ENCODE measurements at regions of chr1 and their contacts with region 1.

Region 1: DNA sequence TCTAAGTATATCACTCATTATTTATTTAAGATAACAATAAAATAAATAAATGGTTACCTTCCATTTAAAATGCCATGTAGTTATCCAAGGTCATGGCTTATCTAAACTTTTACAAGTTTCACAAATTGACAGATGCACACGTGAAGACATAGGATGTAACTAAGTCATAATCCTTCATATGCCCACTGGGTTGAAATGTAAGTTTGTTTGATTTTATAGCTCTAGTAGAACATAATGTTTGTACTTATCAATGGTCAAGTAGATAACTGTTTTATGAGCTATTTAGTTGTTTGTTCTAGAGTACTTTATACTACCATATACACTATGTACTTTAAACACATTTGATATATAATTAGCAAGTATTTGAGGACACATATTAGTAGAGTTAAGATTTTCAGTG is 43.0 kb downstream of the ITGB3BP start:
- DNase-seq: no peak
- H3K4me3 Mint-ChIP-seq: no peak overlapping the region
- H3K27ac Mint-ChIP-seq: no peak overlapping the region
- H3K4me1 Mint-ChIP-seq: no peaks in the 10 kb centered on the region
- H3K27me3 Mint-ChIP-seq: no peaks in the 10 kb centered on the region

Region 2: DNA sequence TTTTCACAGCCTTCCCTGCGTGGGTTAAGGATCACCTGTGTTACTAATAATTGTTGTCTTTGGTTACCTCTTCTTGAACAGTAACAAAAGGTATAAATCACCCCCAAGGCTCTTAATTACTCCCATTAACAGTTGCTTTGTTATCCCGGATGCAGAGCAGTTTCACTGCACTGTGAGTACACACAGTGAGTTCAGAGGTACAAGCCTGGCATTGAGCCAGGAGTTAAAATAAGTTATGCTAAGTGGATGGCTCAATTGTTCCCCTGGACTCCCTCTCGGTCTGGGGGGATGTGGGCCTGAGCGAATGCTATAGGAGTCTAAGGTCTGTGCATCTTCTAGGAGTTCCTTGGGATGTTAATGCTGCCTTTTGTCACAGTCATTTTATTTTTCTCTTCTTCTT is 437.8 kb before region 1 on chr1:
- intact Hi-C with region 1: no loop called
- DNase-seq: no peak
- H3K4me3 Mint-ChIP-seq: no peak overlapping the region
- H3K27ac Mint-ChIP-seq: no peak overlapping the region
- H3K4me1 Mint-ChIP-seq: no peaks in the 10 kb centered on the region
- H3K27me3 Mint-ChIP-seq: no peaks in the 10 kb centered on the region

Region 3: DNA sequence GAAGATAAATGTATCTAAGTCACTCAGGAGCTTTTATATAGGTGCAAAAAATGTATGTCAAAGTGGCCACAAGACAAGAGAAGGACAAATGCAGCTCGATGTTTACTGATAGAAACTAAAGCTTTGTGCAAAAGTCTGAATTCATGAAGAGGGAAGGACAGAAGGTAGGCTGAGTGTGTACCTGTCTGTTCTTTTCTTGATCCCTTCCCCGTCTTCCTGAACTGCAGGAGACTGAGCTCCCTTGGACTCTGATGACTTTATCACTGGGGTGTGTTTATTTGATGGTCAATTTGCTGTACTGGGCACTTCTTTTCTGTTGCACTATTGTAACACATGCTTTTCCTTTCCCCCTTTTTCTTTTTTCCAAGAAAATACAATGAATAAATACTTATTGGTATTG is 17.5 kb after region 1 on chr1:
- intact Hi-C with region 1: loop called (anchors 1 kb)
- DNase-seq: no peak
- H3K4me3 Mint-ChIP-seq: no peak overlapping the region
- H3K27ac Mint-ChIP-seq: no peak overlapping the region
- H3K4me1 Mint-ChIP-seq: peaks cover 3% of the 10 kb centered on the region
- H3K27me3 Mint-ChIP-seq: no peaks in the 10 kb centered on the region

Region 4: DNA sequence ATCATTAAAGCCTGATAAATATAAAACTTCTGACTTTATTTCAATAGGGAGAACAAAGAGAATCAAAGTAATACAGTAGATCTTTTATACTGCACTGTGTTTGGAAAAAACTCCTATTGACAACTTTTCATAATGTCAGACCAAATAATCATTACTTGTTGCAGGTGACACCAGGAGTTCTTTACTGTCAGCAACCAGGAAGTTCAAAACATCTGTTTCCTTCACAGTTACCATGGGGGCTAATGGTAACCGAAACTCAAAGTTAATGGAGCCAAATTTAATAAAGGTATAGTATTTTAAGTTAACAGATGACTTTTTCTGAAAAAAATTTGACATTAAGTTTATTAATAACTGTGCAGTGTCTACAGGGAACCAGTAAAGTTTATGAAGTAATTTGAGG is 53.9 kb after region 1 on chr1:
- intact Hi-C with region 1: no loop called
- DNase-seq: no peak
- H3K4me3 Mint-ChIP-seq: no peak overlapping the region
- H3K27ac Mint-ChIP-seq: no peak overlapping the region
- H3K4me1 Mint-ChIP-seq: no peaks in the 10 kb centered on the region
- H3K27me3 Mint-ChIP-seq: no peaks in the 10 kb centered on the region

Measured in activated CD4-positive, alpha-beta T cell treated with anti-CD3 and anti-CD28 coated beads, Interleukin-2, amount 10 ng/mL, durations not matched to agents 24 days and 14 days (primary cell).